Right ventricle myocardium inferior (tissue), 1 donor: ENCODE measurements at regions of chr4 and their contacts with region 1.

Region 1: DNA sequence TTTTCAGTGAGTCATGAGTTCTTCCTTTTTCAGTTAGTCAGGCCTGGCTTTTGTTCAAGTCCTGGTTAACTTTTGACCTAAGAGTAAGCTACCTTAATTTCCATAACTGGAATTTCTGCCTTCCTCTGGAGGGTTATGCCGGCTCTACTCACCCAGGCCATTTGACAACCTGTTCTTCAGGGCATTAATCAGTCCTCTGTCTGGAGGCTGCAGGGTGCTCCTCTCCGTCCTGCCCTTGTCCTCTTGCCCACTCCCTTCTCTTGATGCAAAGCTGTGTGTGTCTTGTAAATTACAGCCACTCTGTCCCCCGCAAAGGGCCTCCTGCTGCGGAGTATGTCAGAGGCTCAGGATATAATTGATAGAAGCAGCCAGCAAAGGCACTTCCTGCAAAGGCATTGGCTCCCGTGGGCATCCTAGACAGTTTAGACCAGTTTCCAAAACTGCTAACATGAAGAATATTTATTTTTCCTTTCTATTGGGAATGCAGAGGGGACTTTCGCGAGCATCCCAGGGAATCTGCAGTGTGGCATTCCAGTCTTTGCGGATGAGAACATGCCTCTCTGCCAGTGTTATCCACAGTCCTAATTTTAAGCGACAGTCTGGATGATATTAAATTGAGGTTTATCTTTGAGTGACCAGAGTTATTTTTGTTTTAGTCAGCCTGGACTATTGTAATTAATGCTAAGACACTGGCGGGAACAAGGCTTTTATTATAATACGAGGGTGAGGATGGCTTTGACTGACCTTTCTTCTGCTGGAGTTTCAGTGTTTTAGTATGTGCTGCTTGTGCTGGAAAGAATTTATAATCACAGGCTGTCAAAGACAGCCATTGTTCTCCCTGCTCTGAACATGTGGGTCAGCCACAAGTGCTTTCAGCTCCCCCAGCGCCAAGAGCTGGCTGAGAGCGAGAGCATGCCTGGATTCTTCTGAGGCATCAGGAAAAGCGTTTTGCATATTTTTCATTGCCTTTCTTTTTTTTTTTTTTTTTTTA is 74.2 kb downstream of the LIMCH1 start:
- DNase-seq: peak; percentile 72
- ATAC-seq: peak; percentile 90

Region 2: DNA sequence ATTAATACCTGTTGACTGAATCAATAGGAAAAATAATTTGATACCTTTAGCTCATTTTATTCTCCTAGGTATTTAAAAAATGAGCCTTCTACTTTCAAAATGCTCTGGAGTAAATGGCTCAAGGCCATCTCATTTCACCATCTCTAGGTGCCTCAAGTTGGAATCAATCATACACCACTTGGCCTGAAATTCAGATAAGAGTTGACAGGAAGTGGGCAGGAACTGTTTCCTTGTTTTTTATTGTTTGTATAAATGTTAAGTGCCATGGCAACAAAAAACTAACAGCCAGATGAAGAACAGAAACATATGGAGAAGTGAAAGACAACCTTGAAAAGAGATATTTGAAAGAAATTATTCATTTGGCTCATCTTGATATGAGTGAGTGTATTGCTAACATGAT is 61.9 kb before region 1 on chr4:
- intact Hi-C with region 1: no loop called
- DNase-seq: no peak
- ATAC-seq: peak; percentile 69

Region 3: GRCh38 chr4:41569961-41570360 is 42.2 kb before region 1 on chr4:
- intact Hi-C with region 1: loop called (anchors 2 kb)
- DNase-seq: no peak
- ATAC-seq: peak; percentile 93

Region 4: DNA sequence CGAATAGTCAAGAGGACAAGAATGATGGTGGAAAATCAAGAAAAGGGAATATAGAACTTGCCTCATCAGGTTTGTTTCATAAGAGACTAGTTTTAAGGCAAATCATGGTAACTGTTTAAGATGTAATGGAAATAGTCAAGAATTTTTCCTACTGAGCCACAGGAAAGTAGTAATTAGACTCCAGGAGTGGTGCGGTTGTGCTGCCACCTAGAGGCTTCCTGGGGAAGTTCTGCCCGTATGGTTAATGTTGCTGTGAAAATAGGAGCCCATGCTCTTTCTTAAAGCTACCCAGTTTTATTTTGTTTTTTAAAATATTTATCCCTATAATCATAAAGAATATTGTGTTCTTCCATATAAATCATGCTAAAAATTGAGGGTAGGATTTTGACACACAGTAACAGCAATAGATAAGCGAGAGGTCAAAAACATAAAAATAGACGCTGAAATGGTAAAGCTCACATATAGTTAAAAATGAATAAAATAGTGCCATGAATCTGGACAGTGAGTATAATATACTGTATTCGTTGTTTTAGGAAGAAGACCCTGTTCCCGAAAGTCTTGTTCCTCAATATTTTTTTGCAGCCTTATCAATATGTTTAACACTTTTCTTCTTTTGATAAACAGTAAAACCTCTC is 49.4 kb after region 1 on chr4:
- intact Hi-C with region 1: no loop called
- DNase-seq: no peak
- ATAC-seq: peak; percentile 56

Region 5: DNA sequence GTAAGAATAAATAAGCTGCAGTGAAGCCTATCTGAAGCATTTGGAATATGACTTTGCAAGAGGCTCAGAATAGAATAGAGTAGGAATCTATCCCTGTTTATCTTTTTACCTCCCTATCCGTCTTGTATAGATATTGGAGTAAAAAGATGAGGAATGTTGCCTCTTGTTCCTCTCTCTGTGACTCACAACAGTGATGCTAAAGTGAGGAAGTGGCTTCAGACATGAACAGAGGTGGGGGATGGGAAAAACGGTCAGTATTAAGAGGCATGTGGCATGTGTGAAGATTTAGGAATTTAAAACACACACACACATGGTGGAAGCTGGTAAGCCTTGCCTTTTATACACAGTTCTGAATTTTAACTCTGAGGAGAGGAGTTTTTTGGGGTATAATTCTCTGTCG is 365.5 kb after region 1 on chr4:
- intact Hi-C with region 1: no loop called
- DNase-seq: no peak
- ATAC-seq: no peak